Activated naive CD4-positive, alpha-beta T cell treated with anti-CD3 and anti-CD28 coated beads for 36 hours (primary cell): ENCODE measurements at regions of chr9 and their contacts with region 1.

Region 1: DNA sequence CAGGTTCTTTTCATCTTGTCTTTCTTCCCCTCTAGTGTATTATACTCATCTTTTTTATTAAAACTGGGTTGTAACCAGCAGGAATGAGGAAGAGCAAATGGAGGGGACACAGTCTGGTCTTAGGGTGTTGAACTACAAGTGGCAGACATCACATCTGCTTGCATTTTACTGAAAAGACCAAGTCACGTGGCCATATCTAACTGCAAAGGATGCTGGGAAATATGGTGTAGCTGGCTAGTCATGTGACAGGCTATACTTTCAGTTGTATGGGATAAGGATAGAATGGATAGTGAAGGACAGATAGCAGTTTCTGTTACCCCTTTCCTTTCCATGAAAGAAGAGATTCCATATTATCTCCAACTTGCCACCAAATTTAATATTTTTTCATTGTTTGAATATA is 13.0 kb upstream of the FGD3 start:
- DNase-seq: no peak
- H3K4me3 Mint-ChIP-seq: no peak overlapping the region
- H3K27ac Mint-ChIP-seq: no peak overlapping the region
- H3K4me1 Mint-ChIP-seq: no peaks in the 10 kb centered on the region
- H3K27me3 Mint-ChIP-seq: no peaks in the 10 kb centered on the region

Region 2: DNA sequence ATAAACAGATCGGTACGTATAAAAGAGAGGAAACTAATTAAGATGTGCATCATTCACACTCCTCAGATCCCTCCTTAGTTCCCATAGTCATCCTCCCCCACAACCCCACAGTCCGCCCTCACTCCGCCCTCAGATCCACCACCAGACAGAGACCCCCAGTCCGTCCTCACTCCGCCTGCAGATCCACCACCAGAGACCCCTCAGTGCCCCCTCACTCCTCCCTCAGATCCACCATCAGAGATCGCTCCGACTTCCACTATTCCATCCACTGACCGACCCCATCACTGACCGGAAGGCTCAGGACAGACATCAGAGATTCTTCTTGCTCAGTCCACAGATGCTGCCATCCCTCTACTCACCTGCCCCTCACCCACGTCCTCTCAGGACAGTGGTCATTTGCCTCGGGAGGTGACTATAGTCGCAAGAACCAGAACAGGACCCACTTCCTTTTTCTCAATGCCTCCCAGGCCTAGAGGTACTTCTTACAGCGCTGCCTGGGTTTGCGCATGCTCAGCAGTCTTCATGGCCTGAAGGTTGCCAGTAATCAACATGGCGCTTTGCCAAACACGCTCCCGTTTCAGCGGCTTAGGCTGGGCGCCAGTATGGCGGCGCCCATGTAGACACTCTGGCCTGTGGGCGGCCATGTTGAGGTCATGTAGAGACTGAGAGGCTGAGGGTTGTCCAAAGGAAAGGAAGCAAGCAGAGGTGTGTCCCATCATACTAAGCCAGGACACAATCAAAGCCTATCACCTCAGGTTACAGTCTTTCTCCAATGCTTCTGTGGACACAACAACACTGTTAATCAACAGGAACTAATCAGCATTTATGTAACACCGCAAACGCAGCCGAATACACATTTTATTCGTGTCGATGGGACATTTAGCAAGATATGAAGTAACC is 56.5 kb before region 1 on chr9 and contains the start of gene ZNF484:
- CTCF ChIA-PET with region 1: no interaction called
- intact Hi-C with region 1: loop called (anchors 5 kb)
- DNase-seq: peak; percentile 99
- H3K4me3 Mint-ChIP-seq: peak within 1 kb of the TSS; percentile 87
- H3K27ac Mint-ChIP-seq: peak within 1 kb of the TSS; percentile 94
- H3K4me1 Mint-ChIP-seq: peaks cover 40% of the 10 kb centered on the region
- H3K27me3 Mint-ChIP-seq: no peaks in the 10 kb centered on the region
- total RNA-seq, gene ZNF484: 5.8 to 6.5 TPM

Region 3: GRCh38 chr9:92917176-92917800 is 17.0 kb before region 1 on chr9:
- CTCF ChIA-PET with region 1: no interaction called
- intact Hi-C with region 1: no loop called
- DNase-seq: no peak
- H3K4me3 Mint-ChIP-seq: no peak overlapping the region
- H3K27ac Mint-ChIP-seq: no peak overlapping the region
- H3K4me1 Mint-ChIP-seq: peaks cover 12% of the 10 kb centered on the region
- H3K27me3 Mint-ChIP-seq: no peaks in the 10 kb centered on the region

Region 4: DNA sequence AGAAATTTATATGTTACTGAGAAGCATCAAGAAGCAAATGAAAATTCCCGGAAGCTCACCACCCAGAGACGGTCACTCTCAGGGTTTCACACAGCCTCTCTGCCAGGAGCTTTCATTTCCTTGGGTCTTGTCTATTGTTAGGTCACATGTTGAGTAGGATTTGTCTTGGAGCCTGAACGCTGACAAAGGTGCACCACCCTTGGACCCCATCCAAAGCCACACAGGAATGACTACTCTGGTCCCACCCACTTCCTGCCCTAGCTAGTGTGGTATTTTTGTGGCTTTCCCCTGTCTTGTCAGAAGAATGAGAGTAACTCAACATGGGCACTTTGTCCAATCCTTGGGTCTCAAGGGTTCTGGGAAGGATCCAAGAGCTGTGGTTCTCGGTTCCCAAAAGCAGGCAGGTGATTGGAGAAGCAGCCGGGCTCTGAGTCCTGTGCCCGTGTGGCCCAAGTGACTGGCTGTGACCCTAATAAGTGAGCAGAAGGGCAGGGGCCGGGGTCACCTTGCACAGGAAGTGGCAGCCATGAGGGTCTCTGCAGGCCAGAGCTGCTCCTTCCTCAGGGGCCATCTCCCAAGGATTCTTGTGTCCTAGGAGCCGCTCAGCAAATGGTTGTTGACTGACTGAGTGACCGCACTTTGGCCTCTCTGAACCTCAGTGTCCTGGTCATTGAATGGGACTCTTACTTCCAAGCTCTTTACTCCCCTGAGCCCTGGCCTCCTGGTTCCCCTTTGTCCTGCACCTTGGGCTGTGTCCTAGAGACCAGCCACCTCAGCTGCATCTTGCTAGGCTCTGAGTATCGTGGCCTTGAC is 19.9 kb after region 1 on chr9:
- CTCF ChIA-PET with region 1: no interaction called
- intact Hi-C with region 1: no loop called
- DNase-seq: peak; percentile 95
- H3K4me3 Mint-ChIP-seq: peak overlapping the region; percentile 60
- H3K27ac Mint-ChIP-seq: peak overlapping the region; percentile 91
- H3K4me1 Mint-ChIP-seq: peaks cover 75% of the 10 kb centered on the region
- H3K27me3 Mint-ChIP-seq: no peaks in the 10 kb centered on the region